T-cell (primary cell): ENCODE measurements at regions of chr6 and their contacts with region 1.

Region 1: GRCh38 chr6:20271818-20272217 is 59.5 kb upstream of the MBOAT1 start:
- DNase-seq: no peak
- ATAC-seq: no peak
- H3K4me3 ChIP-seq: no peak overlapping the region
- H3K4me3 Mint-ChIP-seq: no peak overlapping the region
- H3K27ac ChIP-seq: no peak overlapping the region
- H3K27ac Mint-ChIP-seq: no peak overlapping the region
- H3K4me1 ChIP-seq: no peaks in the 10 kb centered on the region
- H3K4me1 Mint-ChIP-seq: peaks cover 0 to 6% (median 0%) of the 10 kb centered on the region in 3 donors
- H3K27me3 ChIP-seq: peaks cover 0 to 3% of the 10 kb centered on the region in 2 experiments
- H3K27me3 Mint-ChIP-seq: peaks cover 0 to 2% of the 10 kb centered on the region in 2 donors

Region 2: GRCh38 chr6:18632670-18633410 is 1639.0 kb before region 1 on chr6:
- CTCF ChIA-PET with region 1: no interaction called
- POLR2A ChIA-PET with region 1: no interaction called
- DNase-seq: no peak
- ATAC-seq: no peak
- H3K4me3 ChIP-seq: no peak overlapping the region
- H3K4me3 Mint-ChIP-seq: no peak overlapping the region
- H3K27ac ChIP-seq: no peak overlapping the region
- H3K27ac Mint-ChIP-seq: no peak overlapping the region
- H3K4me1 ChIP-seq: no peaks in the 10 kb centered on the region
- H3K4me1 Mint-ChIP-seq: no peaks in the 10 kb centered on the region
- H3K27me3 ChIP-seq: no peaks in the 10 kb centered on the region
- H3K27me3 Mint-ChIP-seq: peaks cover 0 to 3% of the 10 kb centered on the region in 2 donors

Region 3: DNA sequence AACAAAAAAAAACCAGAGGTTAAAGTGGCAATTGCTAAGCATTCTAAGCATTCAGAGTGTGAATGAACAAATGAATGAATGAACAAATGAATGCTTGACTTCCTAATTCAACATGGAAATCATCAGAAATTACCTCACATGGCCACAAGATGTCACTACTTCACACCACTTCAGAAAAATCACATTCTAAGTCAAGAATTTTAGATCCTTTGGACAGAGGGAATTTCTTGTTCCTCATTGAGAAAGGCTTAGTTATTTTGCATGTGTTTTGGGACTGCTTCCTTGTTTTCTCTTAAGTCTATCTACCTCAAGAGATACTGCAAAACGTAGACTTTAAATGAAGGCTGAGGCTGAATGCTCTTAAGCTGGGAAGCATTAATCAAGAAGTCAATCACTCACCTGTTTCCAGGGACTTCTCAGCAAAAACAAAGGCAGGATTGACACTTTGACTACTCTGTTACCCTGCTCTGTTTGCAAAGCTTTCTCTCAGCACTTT is 179.7 kb before region 1 on chr6:
- CTCF ChIA-PET with region 1: interaction called in 1 of 2 experiments, 11 read pairs
- POLR2A ChIA-PET with region 1: no interaction called
- DNase-seq: peak in 2 of 35 experiments; percentile 4 to 56
- ATAC-seq: no peak
- H3K4me3 ChIP-seq: no peak overlapping the region
- H3K4me3 Mint-ChIP-seq: no peak overlapping the region
- H3K27ac ChIP-seq: no peak overlapping the region
- H3K27ac Mint-ChIP-seq: no peak overlapping the region
- H3K4me1 ChIP-seq: no peaks in the 10 kb centered on the region
- H3K4me1 Mint-ChIP-seq: no peaks in the 10 kb centered on the region
- H3K27me3 ChIP-seq: no peaks in the 10 kb centered on the region
- H3K27me3 Mint-ChIP-seq: no peaks in the 10 kb centered on the region

Region 4: DNA sequence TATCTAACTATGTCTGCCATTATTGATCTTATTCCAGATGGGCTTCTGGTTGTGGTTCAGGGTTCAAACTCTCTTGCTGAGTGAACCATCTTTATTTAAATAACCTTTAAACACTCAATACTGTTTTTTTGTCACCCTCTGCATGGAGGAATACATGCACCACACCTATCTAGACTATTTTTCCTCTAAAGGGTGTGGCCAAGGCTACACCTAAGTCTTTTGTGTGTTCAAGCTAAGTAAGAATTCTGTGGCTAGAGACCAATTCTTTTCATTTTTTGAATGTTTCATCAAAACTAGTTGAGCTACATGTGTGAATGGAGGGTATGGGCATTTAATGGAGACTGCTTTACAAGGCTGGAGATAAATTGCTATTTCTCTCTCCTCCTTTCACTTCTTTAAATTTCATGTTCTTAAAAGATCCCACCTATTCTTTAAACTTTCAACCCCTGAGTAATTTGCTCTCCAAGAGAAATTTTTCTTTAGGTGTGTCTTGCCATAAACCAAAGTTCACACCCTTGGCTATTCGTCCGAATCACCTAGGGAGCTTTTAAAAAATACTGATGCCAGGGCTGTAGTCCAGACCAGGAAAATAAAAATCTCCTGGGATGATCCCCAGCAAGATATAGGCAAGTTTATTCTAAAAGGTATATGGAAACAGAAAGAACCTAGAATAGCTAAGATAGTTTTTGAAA is 34.8 kb before region 1 on chr6:
- CTCF ChIA-PET with region 1: no interaction called
- POLR2A ChIA-PET with region 1: no interaction called
- DNase-seq: no peak
- ATAC-seq: no peak
- H3K4me3 ChIP-seq: no peak overlapping the region
- H3K4me3 Mint-ChIP-seq: no peak overlapping the region
- H3K27ac ChIP-seq: no peak overlapping the region
- H3K27ac Mint-ChIP-seq: peak overlapping the region in 1 of 2 donors; percentile 29
- H3K4me1 ChIP-seq: peaks cover 10 to 11% of the 10 kb centered on the region in 2 experiments
- H3K4me1 Mint-ChIP-seq: peaks cover 6 to 25% (median 14%) of the 10 kb centered on the region in 3 donors
- H3K27me3 ChIP-seq: no peaks in the 10 kb centered on the region
- H3K27me3 Mint-ChIP-seq: no peaks in the 10 kb centered on the region

Region 5: DNA sequence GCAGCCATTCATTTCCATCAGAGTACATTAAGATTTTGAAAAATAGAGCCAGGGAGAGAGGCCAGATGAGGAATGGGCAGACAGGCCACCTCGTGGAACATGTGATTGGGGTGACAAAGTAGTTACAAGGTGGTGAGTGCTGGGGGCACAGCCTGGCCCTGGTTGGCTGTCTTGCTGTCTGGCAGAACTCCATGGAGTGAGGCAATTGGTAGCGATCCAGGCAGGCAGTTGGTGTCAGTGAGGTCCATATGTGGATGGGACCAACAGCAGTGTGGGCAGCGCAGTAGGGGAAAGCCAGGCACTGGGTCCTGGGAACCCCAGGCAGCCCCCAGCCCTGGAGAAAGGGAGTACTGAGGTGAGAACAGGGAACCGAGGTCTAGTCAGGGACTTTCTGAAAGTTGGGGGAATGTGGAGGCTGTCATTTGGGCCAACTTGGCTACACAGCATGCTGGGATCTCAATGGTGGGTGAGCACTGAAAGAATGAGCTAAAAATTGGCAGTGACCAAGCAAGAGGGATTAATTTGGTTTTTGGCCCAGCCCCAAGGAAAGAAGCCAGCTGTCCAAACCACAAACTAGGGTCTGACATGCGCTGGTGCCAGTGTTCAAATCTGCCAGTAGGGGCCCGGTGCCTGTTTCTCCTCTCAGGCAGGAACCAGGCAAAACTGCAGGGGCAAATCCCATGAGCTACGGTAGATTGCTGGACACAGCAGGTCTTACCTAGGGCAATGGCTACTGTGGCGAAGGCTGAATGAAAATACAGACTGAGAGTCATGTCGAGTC is 68.4 kb after region 1 on chr6:
- CTCF ChIA-PET with region 1: no interaction called
- POLR2A ChIA-PET with region 1: no interaction called
- DNase-seq: no peak
- ATAC-seq: no peak
- H3K4me3 ChIP-seq: no peak overlapping the region
- H3K4me3 Mint-ChIP-seq: no peak overlapping the region
- H3K27ac ChIP-seq: no peak overlapping the region
- H3K27ac Mint-ChIP-seq: no peak overlapping the region
- H3K4me1 ChIP-seq: peaks cover 6 to 9% of the 10 kb centered on the region in 2 experiments
- H3K4me1 Mint-ChIP-seq: peaks cover 25 to 39% (median 29%) of the 10 kb centered on the region in 3 donors
- H3K27me3 ChIP-seq: no peaks in the 10 kb centered on the region
- H3K27me3 Mint-ChIP-seq: no peaks in the 10 kb centered on the region